ENCODE measurements at regions of chr1 and their contacts with region 1.

Region 1: GRCh38 chr1:57761628-57762027 is 337.8 kb upstream of the DAB1 start:
- DNase-seq: no peak
- ATAC-seq: no peak
- H3K4me3 ChIP-seq: no peak overlapping the region
- H3K27ac ChIP-seq: no peak overlapping the region
- H3K4me1 ChIP-seq: no peaks in the 10 kb centered on the region
- H3K27me3 ChIP-seq: no peaks in the 10 kb centered on the region
- CTCF ChIP-seq: no peak

Region 2: GRCh38 chr1:57623039-57623790 is 138.4 kb before region 1 on chr1:
- intact Hi-C with region 1: loop called in 1 of 2 experiments (anchors 5 kb)
- DNase-seq: peak in 1 of 2 donors; percentile 22
- ATAC-seq: peak in 1 of 4 donors; percentile 82
- H3K4me3 ChIP-seq: no peak overlapping the region
- H3K27ac ChIP-seq: no peak overlapping the region
- H3K4me1 ChIP-seq: no peaks in the 10 kb centered on the region
- H3K27me3 ChIP-seq: no peaks in the 10 kb centered on the region
- CTCF ChIP-seq: no peak

Measured in psoas muscle (tissue), 8 donors.